Colonic mucosa (tissue), 4 donors: ENCODE measurements at regions of chr7 and their contacts with region 1.

Region 1: DNA sequence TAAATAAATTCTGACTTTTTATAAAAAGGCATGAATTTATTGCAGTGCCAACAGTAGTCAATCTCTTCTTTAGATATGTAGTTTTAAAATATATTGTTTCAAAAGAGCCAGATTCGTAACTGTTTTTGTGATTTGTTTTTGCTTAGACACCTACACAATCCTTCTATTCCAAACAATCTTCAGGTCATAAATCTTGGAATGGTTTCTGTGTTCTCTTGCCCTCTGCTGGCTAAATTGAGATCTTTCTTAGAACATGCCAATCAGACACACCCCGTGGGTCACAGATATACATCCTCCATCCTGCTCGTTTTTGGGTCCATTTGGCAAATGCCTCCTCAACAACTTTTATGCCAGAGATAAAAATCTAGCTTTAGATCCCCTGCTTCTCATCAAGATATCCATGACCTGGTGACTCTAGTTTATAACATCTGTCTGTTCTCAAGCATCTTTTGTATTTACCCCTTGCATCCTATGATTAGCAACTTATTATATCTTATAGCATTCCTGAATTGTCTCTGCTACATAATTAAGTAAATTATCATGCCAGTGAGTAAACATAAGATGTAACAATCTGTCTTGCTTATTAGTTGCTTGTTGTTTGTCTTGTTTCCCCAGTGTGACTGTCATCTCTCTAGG is 35.3 kb upstream of the IFRD1 start:
- DNase-seq: no peak
- H3K4me3 ChIP-seq: no peak overlapping the region
- H3K27ac ChIP-seq: no peak overlapping the region
- H3K4me1 ChIP-seq: no peaks in the 10 kb centered on the region
- H3K27me3 ChIP-seq: no peaks in the 10 kb centered on the region
- CTCF ChIP-seq: peak; percentile 34

Region 2: GRCh38 chr7:111741811-111742240 is 673.1 kb before region 1 on chr7:
- intact Hi-C with region 1: loop called (anchors 5 kb)
- DNase-seq: peak; percentile 45
- H3K4me3 ChIP-seq: no peak overlapping the region
- H3K27ac ChIP-seq: no peak overlapping the region
- H3K4me1 ChIP-seq: no peaks in the 10 kb centered on the region
- H3K27me3 ChIP-seq: no peaks in the 10 kb centered on the region
- CTCF ChIP-seq: peak; percentile 69

Region 3: DNA sequence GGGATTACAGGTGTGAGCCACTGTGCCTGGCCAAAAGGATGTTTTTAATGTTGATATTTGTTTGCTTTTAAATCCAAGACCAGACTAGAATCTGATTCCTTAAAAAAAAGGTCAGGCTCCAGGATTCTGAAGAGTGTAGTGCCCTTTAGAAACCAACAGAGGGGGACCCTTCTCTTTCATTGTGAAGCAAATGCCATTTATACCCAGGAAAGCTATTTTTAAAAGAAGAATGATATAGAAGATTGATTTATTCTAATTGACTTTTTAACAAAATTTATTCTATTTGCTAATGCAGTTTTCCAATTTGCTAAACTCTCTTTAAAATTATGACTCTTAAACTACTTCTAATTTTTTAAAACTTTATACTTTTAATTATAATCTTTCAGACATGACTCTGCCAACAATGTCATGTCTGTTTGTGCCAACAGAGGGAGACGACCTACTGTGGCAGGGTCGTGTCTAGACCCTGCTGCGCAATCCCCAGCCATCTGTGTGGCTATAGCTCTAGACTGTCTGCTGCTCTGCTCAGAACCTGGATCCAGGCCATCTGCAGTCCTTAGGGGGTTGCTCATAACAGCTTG is 651.7 kb before region 1 on chr7:
- intact Hi-C with region 1: loop called (anchors 5 kb)
- DNase-seq: no peak
- H3K4me3 ChIP-seq: no peak overlapping the region
- H3K27ac ChIP-seq: no peak overlapping the region
- H3K4me1 ChIP-seq: no peaks in the 10 kb centered on the region
- H3K27me3 ChIP-seq: no peaks in the 10 kb centered on the region
- CTCF ChIP-seq: peak; percentile 50

Region 4: GRCh38 chr7:112495810-112496462 is 81.0 kb after region 1 on chr7:
- intact Hi-C with region 1: loop called (anchors 10 kb)
- DNase-seq: peak; percentile 47
- H3K4me3 ChIP-seq: no peak overlapping the region
- H3K27ac ChIP-seq: no peak overlapping the region
- H3K4me1 ChIP-seq: no peaks in the 10 kb centered on the region
- H3K27me3 ChIP-seq: no peaks in the 10 kb centered on the region
- CTCF ChIP-seq: peak; percentile 39